ENCODE measurements at regions of chr19 and their contacts with region 1.

Region 1: GRCh38 chr19:23810496-23810895 is 51.8 kb upstream of the ZNF681 start:
- DNase-seq: no peak
- H3K4me3 ChIP-seq: no peak overlapping the region
- H3K27ac ChIP-seq: no peak overlapping the region
- H3K4me1 ChIP-seq: no peaks in the 10 kb centered on the region
- CTCF ChIP-seq: no peak

Region 2: GRCh38 chr19:23716792-23717191 is 93.7 kb before region 1 on chr19:
- CTCF ChIA-PET with region 1: no interaction called
- POLR2A ChIA-PET with region 1: no interaction called
- intact Hi-C with region 1: no loop called
- DNase-seq: no peak
- H3K4me3 ChIP-seq: no peak overlapping the region
- H3K27ac ChIP-seq: no peak overlapping the region
- H3K4me1 ChIP-seq: no peaks in the 10 kb centered on the region
- CTCF ChIP-seq: no peak

Region 3: GRCh38 chr19:23774524-23774971 is 35.9 kb before region 1 on chr19:
- CTCF ChIA-PET with region 1: no interaction called
- POLR2A ChIA-PET with region 1: no interaction called
- intact Hi-C with region 1: no loop called
- DNase-seq: no peak
- H3K4me3 ChIP-seq: no peak overlapping the region
- H3K27ac ChIP-seq: no peak overlapping the region
- H3K4me1 ChIP-seq: no peaks in the 10 kb centered on the region
- CTCF ChIP-seq: no peak

Region 4: GRCh38 chr19:23799321-23799720 is 11.2 kb before region 1 on chr19:
- CTCF ChIA-PET with region 1: no interaction called
- POLR2A ChIA-PET with region 1: interaction called, 10 read pairs
- intact Hi-C with region 1: no loop called
- DNase-seq: peak; percentile 80
- H3K4me3 ChIP-seq: peak overlapping the region; percentile 44
- H3K27ac ChIP-seq: peak overlapping the region; percentile 84
- H3K4me1 ChIP-seq: peaks cover 41% of the 10 kb centered on the region
- CTCF ChIP-seq: no peak

Region 5: DNA sequence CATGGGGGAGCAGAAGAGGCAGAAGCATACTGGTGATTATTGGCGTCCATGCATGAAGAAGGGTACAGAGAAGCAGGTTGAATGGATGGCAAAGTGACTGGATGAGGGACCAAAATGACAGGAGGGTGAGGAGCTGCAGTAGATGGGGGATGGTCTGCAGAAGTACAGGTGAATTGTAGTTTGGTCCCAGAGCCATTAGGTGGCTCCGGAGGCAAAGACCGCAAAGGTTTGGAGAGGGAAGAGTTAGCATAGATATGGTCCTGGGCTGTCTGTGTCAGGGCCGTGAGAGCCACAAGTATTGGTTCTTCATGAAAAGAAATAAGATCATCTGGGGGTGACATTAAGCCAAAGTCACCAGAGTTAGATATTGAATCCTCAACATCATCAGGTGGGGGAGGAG is 45.2 kb after region 1 on chr19:
- CTCF ChIA-PET with region 1: no interaction called
- POLR2A ChIA-PET with region 1: no interaction called
- intact Hi-C with region 1: no loop called
- DNase-seq: peak; percentile 3
- H3K4me3 ChIP-seq: no peak overlapping the region
- H3K27ac ChIP-seq: no peak overlapping the region
- H3K4me1 ChIP-seq: no peaks in the 10 kb centered on the region
- CTCF ChIP-seq: peak; percentile 37; the same call in 1 of the 2 replicates